ENCODE measurements at regions of chr5 and their contacts with region 1.

Region 1: GRCh38 chr5:2352101-2352861 is 399.2 kb downstream of the IRX2 start:
- DNase-seq: no peak
- H3K4me3 ChIP-seq: no peak overlapping the region
- H3K27ac ChIP-seq: no peak overlapping the region
- H3K4me1 ChIP-seq: no peaks in the 10 kb centered on the region
- H3K27me3 ChIP-seq: no peaks in the 10 kb centered on the region
- CTCF ChIP-seq: no peak
- POLR2A ChIP-seq: no peak

Region 2: GRCh38 chr5:1763548-1763911 is 588.8 kb before region 1 on chr5:
- intact Hi-C with region 1: loop called (anchors 5 kb)
- DNase-seq: peak; percentile 27 to 58
- H3K4me3 ChIP-seq: peak overlapping the region in 1 of 3 donors; percentile 33
- H3K27ac ChIP-seq: no peak overlapping the region
- H3K4me1 ChIP-seq: no peaks in the 10 kb centered on the region
- H3K27me3 ChIP-seq: no peaks in the 10 kb centered on the region
- CTCF ChIP-seq: peak in 2 of 3 donors; percentile 19 to 41
- POLR2A ChIP-seq: no peak

Region 3: GRCh38 chr5:1967736-1968135 is 384.5 kb before region 1 on chr5:
- intact Hi-C with region 1: no loop called
- DNase-seq: no peak
- H3K4me3 ChIP-seq: no peak overlapping the region
- H3K27ac ChIP-seq: no peak overlapping the region
- H3K4me1 ChIP-seq: no peaks in the 10 kb centered on the region
- H3K27me3 ChIP-seq: no peaks in the 10 kb centered on the region
- CTCF ChIP-seq: no peak
- POLR2A ChIP-seq: no peak

Region 4: DNA sequence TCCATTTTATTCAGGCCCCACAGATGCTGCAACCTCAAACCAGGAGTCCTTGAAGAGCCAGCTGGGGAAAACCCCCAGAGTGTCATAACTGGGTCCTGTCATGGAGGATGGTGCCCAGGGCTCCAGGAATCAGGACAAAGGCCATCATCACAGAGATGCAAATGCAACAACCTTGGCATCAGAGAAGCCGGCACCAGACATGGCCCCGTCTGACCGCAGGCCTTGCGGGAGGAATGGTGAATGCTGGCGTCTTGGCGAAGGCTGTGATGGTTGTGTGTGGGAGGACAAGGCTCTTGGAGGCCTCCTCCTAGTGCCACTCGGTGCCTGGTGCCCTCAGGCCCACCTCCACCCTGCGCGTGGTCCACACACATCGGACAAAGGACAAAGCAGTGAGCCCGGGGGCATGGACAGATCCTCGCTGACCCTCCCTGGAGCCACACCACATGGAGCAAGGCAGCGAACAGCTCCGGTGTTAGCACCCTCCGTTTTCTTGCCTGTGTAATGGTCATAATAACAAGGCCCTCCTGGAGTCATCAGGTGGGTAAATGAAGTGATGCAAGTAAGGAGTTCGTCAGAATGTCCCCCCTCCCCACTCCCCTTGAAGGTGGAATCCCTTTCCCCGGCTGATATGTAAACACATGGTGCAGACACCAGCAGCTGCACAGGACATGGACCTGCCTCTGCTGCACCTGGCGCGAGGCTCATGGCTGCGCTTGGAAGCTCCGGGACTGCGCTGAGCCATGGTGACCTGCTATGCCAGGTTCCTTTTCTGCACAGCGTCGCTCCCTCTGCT is 18.5 kb after region 1 on chr5:
- intact Hi-C with region 1: no loop called
- DNase-seq: no peak
- H3K4me3 ChIP-seq: no peak overlapping the region
- H3K27ac ChIP-seq: no peak overlapping the region
- H3K4me1 ChIP-seq: no peaks in the 10 kb centered on the region
- H3K27me3 ChIP-seq: no peaks in the 10 kb centered on the region
- CTCF ChIP-seq: no peak
- POLR2A ChIP-seq: no peak

Region 5: DNA sequence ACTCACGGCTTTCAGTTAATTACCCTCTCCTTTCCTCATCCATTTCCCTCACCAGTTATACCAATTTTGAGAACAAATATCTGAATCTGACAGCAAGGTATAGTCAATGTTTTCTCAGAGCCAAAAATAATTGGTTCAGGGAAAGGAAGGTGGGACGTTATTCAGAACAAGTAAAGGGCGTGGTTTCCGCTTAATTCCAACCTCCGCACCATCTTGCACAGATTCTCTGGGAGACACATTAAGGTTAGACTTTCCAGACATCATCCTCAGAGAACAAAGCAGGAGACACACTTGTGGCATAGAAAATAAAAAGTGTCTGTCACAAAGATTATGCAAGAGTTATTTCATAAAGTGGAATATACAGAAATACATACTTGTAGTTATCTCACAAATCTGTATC is 1684.6 kb after region 1 on chr5:
- intact Hi-C with region 1: loop called (anchors 10 kb)
- DNase-seq: no peak
- H3K4me3 ChIP-seq: no peak overlapping the region
- H3K27ac ChIP-seq: no peak overlapping the region
- H3K4me1 ChIP-seq: no peaks in the 10 kb centered on the region
- H3K27me3 ChIP-seq: no peaks in the 10 kb centered on the region
- CTCF ChIP-seq: no peak
- POLR2A ChIP-seq: no peak